Endothelial cell of umbilical vein (primary cell): ENCODE measurements at regions of chr11 and their contacts with region 1.

Region 1: GRCh38 chr11:58524232-58525036 is 16.5 kb upstream of the OR5B21 start:
- DNase-seq: peak; percentile 85
- H3K4me3 ChIP-seq: no peak overlapping the region
- H3K27ac ChIP-seq: no peak overlapping the region
- H3K4me1 ChIP-seq: no peaks in the 10 kb centered on the region
- H3K27me3 ChIP-seq: peaks cover 11 to 12% of the 10 kb centered on the region in 2 experiments
- CTCF ChIP-seq: peak; percentile 62 to 84
- POLR2A ChIP-seq: no peak

Region 2: DNA sequence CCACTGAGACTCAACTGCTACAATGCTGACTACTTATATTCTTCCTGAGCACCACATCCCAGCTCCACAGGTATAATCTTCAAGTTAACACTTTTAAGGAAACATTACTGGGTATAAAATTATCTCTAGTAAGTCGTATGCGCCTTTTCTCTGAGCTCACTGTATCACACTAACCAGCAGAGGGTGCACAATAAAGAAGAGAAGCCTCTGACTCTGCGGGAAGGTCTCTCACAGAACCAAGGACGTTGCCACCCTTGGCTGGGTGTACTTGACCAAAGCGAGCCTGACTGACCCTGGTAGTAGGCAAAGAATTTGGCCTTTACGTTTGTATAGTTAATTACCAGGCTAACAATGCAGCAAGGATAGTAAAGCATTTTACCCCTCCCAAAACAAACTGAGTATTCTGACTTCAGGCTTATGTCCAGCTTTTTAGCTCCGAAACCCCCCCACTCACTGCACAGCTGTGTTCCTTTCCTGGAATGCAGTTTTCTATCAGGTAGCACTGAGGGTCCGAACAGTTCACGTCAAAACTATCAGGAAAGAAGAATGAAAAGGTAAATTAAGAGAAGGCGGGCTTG is 772.7 kb before region 1 on chr11 and contains the start of gene BTBD18:
- CTCF ChIA-PET with region 1: interaction called, 11 read pairs
- POLR2A ChIA-PET with region 1: no interaction called
- dilution Hi-C with region 1: no loop called
- intact Hi-C with region 1: loop called (anchors 1 kb)
- DNase-seq: peak; percentile 60
- H3K4me3 ChIP-seq: no peak within 1 kb of the TSS
- H3K27ac ChIP-seq: no peak within 1 kb of the TSS
- H3K4me1 ChIP-seq: no peaks in the 10 kb centered on the region
- H3K27me3 ChIP-seq: no peaks in the 10 kb centered on the region
- CTCF ChIP-seq: peak; percentile 46 to 49
- POLR2A ChIP-seq: no peak
- total RNA-seq, gene BTBD18: not detected in 2 replicates

Region 3: DNA sequence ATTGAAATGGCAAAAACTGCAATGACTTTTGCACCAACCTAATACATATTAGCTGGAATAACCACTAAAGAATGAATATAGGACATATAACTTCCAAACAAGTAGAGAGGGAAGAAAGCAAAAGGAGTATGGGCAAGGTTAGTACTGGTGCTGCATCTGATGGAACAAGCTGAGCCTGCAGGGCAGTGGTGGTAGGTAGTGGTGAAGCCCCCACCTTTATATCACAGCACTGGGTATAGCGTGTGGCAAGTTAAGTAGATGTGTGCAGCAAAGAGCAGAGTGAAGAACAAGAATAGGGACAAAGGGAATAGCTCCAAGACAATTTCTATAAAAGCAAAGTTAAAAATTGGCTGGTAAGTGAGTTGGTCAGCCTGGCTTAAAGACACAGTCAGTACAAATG is 700.6 kb before region 1 on chr11:
- CTCF ChIA-PET with region 1: interaction called, 5 read pairs
- POLR2A ChIA-PET with region 1: no interaction called
- dilution Hi-C with region 1: no loop called
- intact Hi-C with region 1: loop called (anchors 5 kb)
- DNase-seq: no peak
- H3K4me3 ChIP-seq: no peak overlapping the region
- H3K27ac ChIP-seq: no peak overlapping the region
- H3K4me1 ChIP-seq: no peaks in the 10 kb centered on the region
- H3K27me3 ChIP-seq: no peaks in the 10 kb centered on the region
- CTCF ChIP-seq: no peak
- POLR2A ChIP-seq: no peak

Region 4: GRCh38 chr11:57842873-57843272 is 681.6 kb before region 1 on chr11:
- CTCF ChIA-PET with region 1: interaction called, 3 read pairs
- POLR2A ChIA-PET with region 1: no interaction called
- dilution Hi-C with region 1: no loop called
- intact Hi-C with region 1: loop called (anchors 5 kb)
- DNase-seq: peak; percentile 32
- H3K4me3 ChIP-seq: no peak overlapping the region
- H3K27ac ChIP-seq: no peak overlapping the region
- H3K4me1 ChIP-seq: no peaks in the 10 kb centered on the region
- H3K27me3 ChIP-seq: peaks cover 4 to 5% of the 10 kb centered on the region in 2 experiments
- CTCF ChIP-seq: no peak
- POLR2A ChIP-seq: no peak

Region 5: DNA sequence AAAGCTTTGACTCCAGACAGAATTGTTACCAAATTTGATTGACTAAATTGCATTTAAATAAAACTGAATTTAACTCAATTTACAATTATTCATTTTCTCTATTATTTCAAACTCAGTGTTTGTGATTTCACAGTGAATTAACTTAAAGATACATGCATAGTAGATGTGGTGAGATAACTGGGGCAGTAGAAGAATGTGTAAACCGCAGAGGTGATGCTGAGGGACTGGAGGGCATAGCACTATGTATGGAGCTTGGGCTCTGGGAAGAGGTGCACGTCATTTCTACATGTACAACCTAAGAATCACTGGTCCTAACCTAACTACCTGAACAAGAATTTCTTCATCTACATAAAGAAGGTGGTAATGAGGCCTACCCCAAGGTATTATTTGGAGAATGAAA is 179.2 kb before region 1 on chr11:
- CTCF ChIA-PET with region 1: no interaction called
- POLR2A ChIA-PET with region 1: no interaction called
- dilution Hi-C with region 1: no loop called
- intact Hi-C with region 1: no loop called
- DNase-seq: no peak
- H3K4me3 ChIP-seq: no peak overlapping the region
- H3K27ac ChIP-seq: no peak overlapping the region
- H3K4me1 ChIP-seq: no peaks in the 10 kb centered on the region
- H3K27me3 ChIP-seq: no peaks in the 10 kb centered on the region
- CTCF ChIP-seq: no peak
- POLR2A ChIP-seq: no peak

Region 6: DNA sequence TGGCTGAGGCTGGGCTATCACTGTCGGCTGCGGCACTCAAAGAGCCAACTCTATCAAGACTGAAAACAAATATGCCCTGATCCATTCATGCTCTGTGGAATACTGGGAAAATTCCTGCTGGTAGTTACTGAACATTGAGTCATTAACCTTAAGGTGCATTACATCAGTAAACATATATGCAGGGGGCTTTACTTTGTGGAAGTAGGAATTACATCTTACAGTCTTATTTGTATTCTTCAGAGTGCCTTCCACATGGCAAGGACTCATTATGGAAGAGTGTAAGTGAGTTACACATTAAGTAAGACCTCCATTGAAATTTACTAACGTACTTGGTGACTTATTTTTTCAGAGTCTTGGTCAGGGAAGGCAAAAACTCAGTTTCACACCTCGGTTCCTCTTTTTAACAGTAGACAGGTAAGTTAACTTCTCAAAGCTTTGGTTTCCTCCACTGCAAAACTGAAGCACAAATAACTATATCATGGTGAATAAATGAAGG is 21.0 kb before region 1 on chr11:
- CTCF ChIA-PET with region 1: interaction called, 10 read pairs
- POLR2A ChIA-PET with region 1: no interaction called
- dilution Hi-C with region 1: no loop called
- intact Hi-C with region 1: no loop called
- DNase-seq: no peak
- H3K4me3 ChIP-seq: no peak overlapping the region
- H3K27ac ChIP-seq: no peak overlapping the region
- H3K4me1 ChIP-seq: no peaks in the 10 kb centered on the region
- H3K27me3 ChIP-seq: peaks cover 1 to 7% of the 10 kb centered on the region in 2 experiments
- CTCF ChIP-seq: no peak
- POLR2A ChIP-seq: no peak

Region 7: DNA sequence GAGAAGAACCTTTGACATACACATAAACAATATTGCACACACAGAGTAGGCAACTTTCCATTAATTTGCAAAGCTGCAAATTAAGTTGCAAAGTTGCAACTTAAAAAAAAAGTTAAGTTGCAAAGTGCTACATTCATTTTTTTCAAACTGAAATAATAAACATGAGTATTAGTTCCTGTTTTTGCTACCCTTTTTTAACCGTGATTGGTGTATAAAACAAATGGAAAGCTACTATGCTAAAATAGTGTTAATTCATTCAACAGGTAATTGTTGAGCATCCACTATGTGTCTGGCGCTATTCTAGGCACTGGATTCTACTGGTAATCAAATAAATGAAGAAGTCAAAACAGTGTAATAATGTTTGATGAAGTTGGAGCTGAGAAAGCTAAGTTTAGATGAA is 62.6 kb after region 1 on chr11:
- CTCF ChIA-PET with region 1: no interaction called
- POLR2A ChIA-PET with region 1: no interaction called
- dilution Hi-C with region 1: no loop called
- intact Hi-C with region 1: no loop called
- DNase-seq: no peak
- H3K4me3 ChIP-seq: no peak overlapping the region
- H3K27ac ChIP-seq: no peak overlapping the region
- H3K4me1 ChIP-seq: no peaks in the 10 kb centered on the region
- H3K27me3 ChIP-seq: no peaks in the 10 kb centered on the region
- CTCF ChIP-seq: no peak
- POLR2A ChIP-seq: no peak

Region 8: GRCh38 chr11:58597486-58598144 is 73.2 kb after region 1 on chr11:
- CTCF ChIA-PET with region 1: no interaction called
- POLR2A ChIA-PET with region 1: no interaction called
- dilution Hi-C with region 1: no loop called
- intact Hi-C with region 1: no loop called
- DNase-seq: no peak
- H3K4me3 ChIP-seq: no peak overlapping the region
- H3K27ac ChIP-seq: no peak overlapping the region
- H3K4me1 ChIP-seq: no peaks in the 10 kb centered on the region
- H3K27me3 ChIP-seq: no peaks in the 10 kb centered on the region
- CTCF ChIP-seq: no peak
- POLR2A ChIP-seq: no peak

Region 9: DNA sequence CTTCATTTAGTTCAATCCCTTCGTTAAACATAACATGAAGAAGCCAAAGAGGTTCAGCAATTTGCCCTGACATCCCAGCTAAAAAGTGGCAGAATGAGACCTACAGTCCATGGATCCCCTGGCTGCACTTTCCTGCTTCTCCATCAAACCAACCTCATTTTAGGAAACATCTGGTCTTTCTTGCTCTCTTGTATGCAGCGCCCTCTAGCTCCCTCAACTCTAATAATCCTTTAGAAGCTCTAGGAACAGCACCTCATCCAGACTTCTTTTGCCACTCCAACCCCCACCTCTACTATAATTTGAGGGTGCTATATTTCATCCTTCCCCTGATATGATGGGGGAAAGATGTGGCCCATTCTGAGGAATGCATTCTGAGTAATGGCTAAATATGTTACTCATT is 105.4 kb after region 1 on chr11:
- CTCF ChIA-PET with region 1: interaction called, 10 read pairs
- POLR2A ChIA-PET with region 1: no interaction called
- dilution Hi-C with region 1: no loop called
- intact Hi-C with region 1: no loop called
- DNase-seq: peak; percentile 46
- H3K4me3 ChIP-seq: no peak overlapping the region
- H3K27ac ChIP-seq: no peak overlapping the region
- H3K4me1 ChIP-seq: peaks cover 13% of the 10 kb centered on the region
- H3K27me3 ChIP-seq: no peaks in the 10 kb centered on the region
- CTCF ChIP-seq: peak; percentile 41 to 65
- POLR2A ChIP-seq: no peak